ENCODE measurements at regions of chr5 and their contacts with region 1.

Region 1: DNA sequence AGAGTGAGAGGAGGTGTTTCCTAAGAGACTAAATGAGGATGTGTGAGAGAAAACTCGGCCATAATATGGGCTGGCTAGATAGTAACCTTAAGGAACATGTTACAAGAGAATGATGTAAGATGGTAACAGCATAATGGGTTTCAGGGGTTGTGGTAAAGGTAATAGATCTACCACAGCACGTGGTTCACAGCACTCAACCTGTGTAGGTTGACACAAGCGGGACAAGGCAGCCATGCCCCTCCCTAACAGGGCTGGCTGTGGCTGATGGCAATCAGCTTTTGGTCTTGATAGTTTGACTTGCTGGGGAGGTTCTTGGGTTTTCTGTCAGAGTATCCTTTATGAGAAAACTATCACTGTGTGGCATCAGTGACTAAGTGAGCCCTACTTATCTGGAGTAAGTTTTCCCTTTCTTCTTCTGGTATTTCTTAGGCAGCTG is 138.6 kb downstream of the TRIO start:
- DNase-seq: no peak
- H3K4me3 ChIP-seq: no peak overlapping the region
- H3K27ac ChIP-seq: no peak overlapping the region
- H3K4me1 ChIP-seq: peaks cover 0 to 71% (median 3%) of the 10 kb centered on the region in 4 donors
- H3K27me3 ChIP-seq: no peaks in the 10 kb centered on the region
- CTCF ChIP-seq: no peak

Region 2: GRCh38 chr5:13987843-13988464 is 293.8 kb before region 1 on chr5:
- intact Hi-C with region 1: loop called (anchors 5 kb)
- DNase-seq: peak in 1 of 2 donors; percentile 43
- H3K4me3 ChIP-seq: no peak overlapping the region
- H3K27ac ChIP-seq: no peak overlapping the region
- H3K4me1 ChIP-seq: peaks cover 0 to 10% (median 0%) of the 10 kb centered on the region in 4 donors
- H3K27me3 ChIP-seq: peaks cover 0 to 3% of the 10 kb centered on the region in 2 donors
- CTCF ChIP-seq: peak; percentile 77 to 82

Region 3: DNA sequence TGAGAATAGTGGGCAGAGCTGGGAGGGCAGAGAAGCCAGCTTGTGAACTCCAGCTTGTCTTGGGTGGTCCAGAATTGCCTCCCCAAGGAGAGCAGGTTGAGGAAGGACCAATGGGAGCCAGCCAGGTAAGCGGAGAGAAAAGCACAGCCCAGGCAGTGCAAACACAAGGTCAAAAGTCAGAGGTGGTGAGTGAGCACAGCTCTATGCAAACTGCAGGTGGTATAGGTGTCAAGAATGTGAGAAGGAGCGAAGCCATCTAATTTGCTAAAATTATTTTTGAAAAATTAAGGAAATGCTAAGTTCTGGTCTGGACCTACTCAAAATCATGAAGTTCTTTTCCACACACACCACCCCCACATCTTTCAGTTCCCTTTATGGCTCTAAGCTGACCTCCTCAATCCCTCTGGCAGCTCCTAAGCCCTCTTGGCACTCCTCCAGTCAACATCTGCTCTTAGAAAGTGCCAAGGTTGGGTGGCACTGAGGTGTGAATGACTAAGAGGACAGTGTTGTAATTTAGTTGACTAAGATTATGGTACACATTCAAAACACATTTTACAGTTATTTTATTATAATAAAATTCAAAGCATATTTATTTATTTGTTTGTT is 293.2 kb after region 1 on chr5:
- intact Hi-C with region 1: no loop called
- DNase-seq: peak in 1 of 2 donors; percentile 67
- H3K4me3 ChIP-seq: no peak overlapping the region
- H3K27ac ChIP-seq: no peak overlapping the region
- H3K4me1 ChIP-seq: no peaks in the 10 kb centered on the region
- H3K27me3 ChIP-seq: peaks cover 0 to 33% of the 10 kb centered on the region in 2 donors
- CTCF ChIP-seq: no peak